Dorsolateral prefrontal cortex (tissue), 120 donors: ENCODE measurements at regions of chr1 and their contacts with region 1.

Region 1: GRCh38 chr1:150696590-150697524 is at the start of gene GOLPH3L:
- DNase-seq: peak; percentile 58 to 98 (median 94)
- H3K4me3 ChIP-seq: peak within 1 kb of the TSS; percentile 55 to 85 (median 72)
- H3K27ac ChIP-seq: peak within 1 kb of the TSS in 55 of 59 donors; percentile 3 to 87 (median 63)
- H3K27me3 ChIP-seq: no peaks in the 10 kb centered on the region
- CTCF ChIP-seq: peak in 45 of 56 donors; percentile 6 to 55 (median 28)
- total RNA-seq, gene GOLPH3L: 11.4 to 39.5 (median 25.0) TPM

Region 2: GRCh38 chr1:150552093-150552691 is 144.7 kb before region 1 on chr1:
- intact Hi-C with region 1: loop called in 1 of 2 experiments (anchors 10 kb)
- DNase-seq: peak in 4 of 10 donors; percentile 20 to 62 (median 38)
- H3K4me3 ChIP-seq: no peak overlapping the region
- H3K27ac ChIP-seq: peak overlapping the region in 30 of 59 donors; percentile 7 to 80 (median 40)
- H3K27me3 ChIP-seq: no peaks in the 10 kb centered on the region
- CTCF ChIP-seq: no peak